ENCODE measurements at regions of chr13 and their contacts with region 1.

Region 1: GRCh38 chr13:75694722-75695121 is 58.6 kb downstream of the LMO7 start:
- DNase-seq: no peak
- H3K4me3 ChIP-seq: no peak overlapping the region
- H3K4me3 Mint-ChIP-seq: no peak overlapping the region
- H3K27ac ChIP-seq: no peak overlapping the region
- H3K27ac Mint-ChIP-seq: no peak overlapping the region
- H3K4me1 ChIP-seq: peaks cover 4% of the 10 kb centered on the region
- H3K4me1 Mint-ChIP-seq: peaks cover 0 to 2% (median 0%) of the 10 kb centered on the region in 4 donors
- H3K27me3 ChIP-seq: no peaks in the 10 kb centered on the region
- H3K27me3 Mint-ChIP-seq: no peaks in the 10 kb centered on the region

Region 2: GRCh38 chr13:75415692-75416091 is 279.0 kb before region 1 on chr13:
- CTCF ChIA-PET with region 1: no interaction called
- POLR2A ChIA-PET with region 1: no interaction called
- intact Hi-C with region 1: no loop called
- DNase-seq: no peak
- H3K4me3 ChIP-seq: no peak overlapping the region
- H3K4me3 Mint-ChIP-seq: no peak overlapping the region
- H3K27ac ChIP-seq: no peak overlapping the region
- H3K27ac Mint-ChIP-seq: no peak overlapping the region
- H3K4me1 ChIP-seq: no peaks in the 10 kb centered on the region
- H3K4me1 Mint-ChIP-seq: peaks cover 0 to 1% (median 0%) of the 10 kb centered on the region in 4 donors
- H3K27me3 ChIP-seq: no peaks in the 10 kb centered on the region
- H3K27me3 Mint-ChIP-seq: peaks cover 5 to 9% of the 10 kb centered on the region in 2 donors

Region 3: DNA sequence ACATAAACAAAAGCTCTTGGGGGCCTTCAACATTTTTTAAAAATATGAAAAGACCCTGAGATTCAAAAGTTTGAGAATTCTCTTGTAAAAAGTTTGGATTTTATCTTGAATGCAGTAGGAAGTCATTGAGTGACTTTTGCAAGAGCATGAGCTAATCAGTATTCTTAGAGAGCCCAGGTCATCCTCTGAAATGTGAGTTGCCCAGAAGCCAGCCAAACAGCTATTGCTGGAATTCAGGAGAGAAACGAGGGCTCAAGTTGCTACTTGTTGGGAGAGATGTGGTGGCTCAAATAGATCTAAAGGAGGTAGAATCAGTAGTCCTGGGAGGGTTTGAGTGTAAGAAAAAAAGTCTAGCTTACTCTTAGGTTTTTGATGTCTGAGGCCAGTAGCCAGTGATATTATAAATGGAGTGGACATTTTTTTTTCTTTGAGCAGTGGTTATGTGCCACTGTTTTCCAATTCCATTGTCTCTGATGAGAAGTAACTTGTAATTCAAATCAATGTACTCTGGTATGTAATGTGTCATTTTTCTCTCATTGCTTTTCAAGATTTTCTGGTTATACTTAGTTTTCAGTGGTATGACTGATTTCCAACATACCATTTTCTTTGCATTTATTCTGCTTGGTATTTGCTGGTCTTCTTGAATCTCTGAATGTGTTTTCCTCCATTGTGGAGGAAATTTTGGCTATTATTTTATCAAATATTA is 27.9 kb before region 1 on chr13:
- CTCF ChIA-PET with region 1: interaction called, 13 read pairs
- POLR2A ChIA-PET with region 1: no interaction called
- intact Hi-C with region 1: no loop called
- DNase-seq: no peak
- H3K4me3 ChIP-seq: no peak overlapping the region
- H3K4me3 Mint-ChIP-seq: no peak overlapping the region
- H3K27ac ChIP-seq: no peak overlapping the region
- H3K27ac Mint-ChIP-seq: no peak overlapping the region
- H3K4me1 ChIP-seq: no peaks in the 10 kb centered on the region
- H3K4me1 Mint-ChIP-seq: peaks cover 0 to 1% (median 0%) of the 10 kb centered on the region in 4 donors
- H3K27me3 ChIP-seq: no peaks in the 10 kb centered on the region
- H3K27me3 Mint-ChIP-seq: no peaks in the 10 kb centered on the region

Region 4: GRCh38 chr13:75704579-75705320 is 10.0 kb after region 1 on chr13:
- CTCF ChIA-PET with region 1: interaction called, 45 read pairs
- POLR2A ChIA-PET with region 1: no interaction called
- intact Hi-C with region 1: no loop called
- DNase-seq: no peak
- H3K4me3 ChIP-seq: no peak overlapping the region
- H3K4me3 Mint-ChIP-seq: no peak overlapping the region
- H3K27ac ChIP-seq: no peak overlapping the region
- H3K27ac Mint-ChIP-seq: peak overlapping the region in 3 of 7 donors; percentile 31 to 43 (median 37)
- H3K4me1 ChIP-seq: no peaks in the 10 kb centered on the region
- H3K4me1 Mint-ChIP-seq: peaks cover 3 to 10% (median 6%) of the 10 kb centered on the region in 4 donors
- H3K27me3 ChIP-seq: no peaks in the 10 kb centered on the region
- H3K27me3 Mint-ChIP-seq: no peaks in the 10 kb centered on the region

Region 5: DNA sequence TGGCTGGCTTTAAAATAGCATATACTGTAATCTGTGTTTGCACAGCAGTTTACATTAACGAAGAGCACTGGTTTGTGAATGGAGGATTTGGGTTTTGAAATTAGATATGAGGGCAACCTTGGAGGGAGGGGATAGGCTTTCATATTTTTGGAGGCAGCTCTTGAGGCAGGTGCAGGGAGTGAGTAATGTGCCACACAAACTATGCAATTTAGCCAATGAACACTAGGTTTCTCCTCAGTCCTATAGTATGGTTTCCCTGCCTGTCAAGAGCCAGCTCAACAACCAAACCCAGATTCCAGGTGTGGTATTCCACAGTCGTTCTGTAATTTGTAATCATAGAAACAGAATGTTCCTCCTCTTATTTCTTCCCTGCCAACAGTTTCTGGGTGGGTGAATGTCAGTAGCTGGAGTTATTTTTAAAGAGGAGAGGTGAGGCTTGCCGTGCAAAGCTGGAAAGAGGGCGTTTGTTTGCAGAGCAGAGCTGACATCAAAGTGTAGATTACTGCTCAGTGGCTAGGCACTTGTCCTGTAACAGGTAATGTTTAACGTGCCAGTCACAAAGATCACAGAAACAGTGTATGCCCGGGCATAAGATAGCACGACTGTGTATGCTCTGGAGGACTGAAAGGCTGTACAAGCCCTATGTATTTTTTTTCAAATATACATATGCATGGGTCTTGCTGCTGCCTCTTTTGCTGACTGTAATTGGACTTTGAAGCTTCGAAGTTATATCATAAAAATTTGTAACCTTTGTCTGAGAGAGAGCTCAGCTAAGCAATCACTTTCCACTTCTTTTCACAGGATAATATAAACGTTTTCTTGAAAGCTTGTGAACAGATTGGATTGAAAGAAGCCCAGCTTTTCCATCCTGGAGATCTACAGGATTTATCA is 65.7 kb after region 1 on chr13:
- CTCF ChIA-PET with region 1: interaction called, 32 read pairs
- POLR2A ChIA-PET with region 1: interaction called, 3 read pairs
- intact Hi-C with region 1: loop called (anchors 5 kb)
- DNase-seq: peak in 4 of 5 donors; percentile 24 to 29 (median 26)
- H3K4me3 ChIP-seq: peak overlapping the region in 1 of 2 donors; percentile 20
- H3K4me3 Mint-ChIP-seq: peak overlapping the region; percentile 77 to 91 (median 84)
- H3K27ac ChIP-seq: no peak overlapping the region
- H3K27ac Mint-ChIP-seq: peak overlapping the region; percentile 62 to 87 (median 77)
- H3K4me1 ChIP-seq: peaks cover 64% of the 10 kb centered on the region
- H3K4me1 Mint-ChIP-seq: peaks cover 54 to 80% (median 66%) of the 10 kb centered on the region in 4 donors
- H3K27me3 ChIP-seq: no peaks in the 10 kb centered on the region
- H3K27me3 Mint-ChIP-seq: no peaks in the 10 kb centered on the region

Region 6: DNA sequence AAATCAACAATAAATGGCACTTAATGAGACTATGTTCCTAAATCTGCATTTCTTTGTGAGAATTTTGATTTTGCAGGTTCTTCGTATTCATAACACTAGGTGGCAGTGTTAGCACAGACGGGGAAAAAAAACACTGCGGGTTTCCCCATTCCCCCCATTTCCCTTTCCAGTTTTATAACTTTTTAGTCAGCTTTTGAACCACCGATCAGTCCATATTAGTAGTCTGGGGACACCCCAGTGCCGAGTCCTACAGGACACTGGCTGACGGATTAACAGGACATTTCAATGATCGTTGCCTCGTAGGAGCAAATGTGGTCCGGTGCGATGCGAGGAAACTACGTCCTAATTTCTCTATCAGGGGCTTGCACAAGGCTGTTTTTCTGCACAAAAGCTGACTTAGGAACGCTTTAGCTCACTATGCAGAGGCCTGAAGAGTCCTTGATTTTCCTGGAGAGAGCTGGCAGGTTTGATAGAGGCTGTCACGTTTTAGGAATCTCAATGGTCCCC is 175.7 kb after region 1 on chr13:
- CTCF ChIA-PET with region 1: interaction called, 61 read pairs
- POLR2A ChIA-PET with region 1: no interaction called
- intact Hi-C with region 1: loop called (anchors 2 kb)
- DNase-seq: peak in 4 of 5 donors; percentile 41 to 52 (median 44)
- H3K4me3 ChIP-seq: peak overlapping the region; percentile 26 to 30
- H3K4me3 Mint-ChIP-seq: peak overlapping the region; percentile 68 to 86 (median 80)
- H3K27ac ChIP-seq: peak overlapping the region; percentile 44
- H3K27ac Mint-ChIP-seq: peak overlapping the region; percentile 71 to 90 (median 89)
- H3K4me1 ChIP-seq: peaks cover 19% of the 10 kb centered on the region
- H3K4me1 Mint-ChIP-seq: peaks cover 6 to 23% (median 18%) of the 10 kb centered on the region in 4 donors
- H3K27me3 ChIP-seq: no peaks in the 10 kb centered on the region
- H3K27me3 Mint-ChIP-seq: no peaks in the 10 kb centered on the region

Region 7: GRCh38 chr13:76016799-76017400 is 322.2 kb after region 1 on chr13:
- CTCF ChIA-PET with region 1: interaction called, 9 read pairs
- POLR2A ChIA-PET with region 1: no interaction called
- intact Hi-C with region 1: loop called (anchors 1 kb)
- DNase-seq: peak in 1 of 5 donors; percentile 5
- H3K4me3 ChIP-seq: no peak overlapping the region
- H3K4me3 Mint-ChIP-seq: no peak overlapping the region
- H3K27ac ChIP-seq: no peak overlapping the region
- H3K27ac Mint-ChIP-seq: no peak overlapping the region
- H3K4me1 ChIP-seq: no peaks in the 10 kb centered on the region
- H3K4me1 Mint-ChIP-seq: peaks cover 0 to 3% (median 0%) of the 10 kb centered on the region in 4 donors
- H3K27me3 ChIP-seq: no peaks in the 10 kb centered on the region
- H3K27me3 Mint-ChIP-seq: peaks cover 0 to 2% of the 10 kb centered on the region in 2 donors

Region 8: DNA sequence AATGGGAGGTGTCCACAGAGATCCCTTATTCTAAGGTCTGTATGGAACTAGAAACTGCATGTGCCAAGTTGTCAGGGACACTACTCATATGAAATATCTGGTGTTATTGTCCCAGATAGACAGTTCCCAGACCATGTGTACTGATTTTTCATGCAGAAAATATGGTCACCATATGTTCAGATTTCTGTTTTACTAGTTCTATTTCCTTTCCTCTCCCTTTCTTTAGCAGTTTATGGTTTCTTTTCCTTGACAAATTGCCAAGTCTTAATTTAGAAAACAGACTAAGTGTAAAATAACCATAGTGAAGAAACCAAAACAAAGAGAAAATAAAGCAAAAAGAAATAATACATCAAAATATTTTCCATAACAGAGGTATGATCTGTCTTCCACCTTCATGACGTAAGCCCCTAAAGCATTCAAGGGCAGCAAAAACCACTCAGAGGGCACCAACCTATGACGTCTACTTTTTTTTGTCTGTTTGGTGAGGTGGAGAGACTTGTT is 943.0 kb after region 1 on chr13:
- CTCF ChIA-PET with region 1: no interaction called
- POLR2A ChIA-PET with region 1: no interaction called
- intact Hi-C with region 1: no loop called
- DNase-seq: no peak
- H3K4me3 ChIP-seq: no peak overlapping the region
- H3K4me3 Mint-ChIP-seq: no peak overlapping the region
- H3K27ac ChIP-seq: no peak overlapping the region
- H3K27ac Mint-ChIP-seq: no peak overlapping the region
- H3K4me1 ChIP-seq: no peaks in the 10 kb centered on the region
- H3K4me1 Mint-ChIP-seq: no peaks in the 10 kb centered on the region
- H3K27me3 ChIP-seq: no peaks in the 10 kb centered on the region
- H3K27me3 Mint-ChIP-seq: peaks cover 3 to 5% of the 10 kb centered on the region in 2 donors

Region 9: GRCh38 chr13:76903544-76904162 is 1208.9 kb after region 1 on chr13:
- CTCF ChIA-PET with region 1: interaction called, 25 read pairs
- POLR2A ChIA-PET with region 1: no interaction called
- intact Hi-C with region 1: no loop called
- DNase-seq: peak; percentile 60 to 68 (median 64)
- H3K4me3 ChIP-seq: no peak overlapping the region
- H3K4me3 Mint-ChIP-seq: no peak overlapping the region
- H3K27ac ChIP-seq: no peak overlapping the region
- H3K27ac Mint-ChIP-seq: no peak overlapping the region
- H3K4me1 ChIP-seq: no peaks in the 10 kb centered on the region
- H3K4me1 Mint-ChIP-seq: no peaks in the 10 kb centered on the region
- H3K27me3 ChIP-seq: no peaks in the 10 kb centered on the region
- H3K27me3 Mint-ChIP-seq: peaks cover 10 to 12% of the 10 kb centered on the region in 2 donors

Measured in CD4-positive, alpha-beta memory T cell (primary cell).